ENCODE measurements at regions of chr14 and their contacts with region 1.

Region 1: DNA sequence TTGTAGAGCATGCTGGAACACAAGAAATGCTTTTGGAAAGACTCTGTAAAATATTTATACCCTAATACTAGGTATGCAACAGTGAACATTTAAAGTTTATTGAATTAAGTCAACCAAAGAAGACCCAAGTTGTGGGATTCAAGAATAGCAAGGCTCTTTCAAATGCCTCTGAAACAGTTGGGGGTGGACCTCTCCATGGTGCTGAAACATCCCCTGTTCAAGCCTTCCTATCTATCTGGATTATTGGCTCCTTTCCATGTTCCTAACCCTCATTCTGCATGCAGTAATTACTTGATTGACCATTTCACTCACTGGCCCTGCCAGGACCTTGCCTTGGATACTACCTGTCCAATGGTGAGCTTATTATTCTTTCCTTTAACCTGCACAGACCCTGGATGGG is 349.7 kb downstream of the NRXN3 start:
- DNase-seq: peak; percentile 48
- ATAC-seq: no peak
- H3K4me3 Mint-ChIP-seq: no peak overlapping the region
- H3K27ac Mint-ChIP-seq: no peak overlapping the region
- H3K4me1 Mint-ChIP-seq: no peaks in the 10 kb centered on the region
- H3K27me3 Mint-ChIP-seq: no peaks in the 10 kb centered on the region

Region 2: DNA sequence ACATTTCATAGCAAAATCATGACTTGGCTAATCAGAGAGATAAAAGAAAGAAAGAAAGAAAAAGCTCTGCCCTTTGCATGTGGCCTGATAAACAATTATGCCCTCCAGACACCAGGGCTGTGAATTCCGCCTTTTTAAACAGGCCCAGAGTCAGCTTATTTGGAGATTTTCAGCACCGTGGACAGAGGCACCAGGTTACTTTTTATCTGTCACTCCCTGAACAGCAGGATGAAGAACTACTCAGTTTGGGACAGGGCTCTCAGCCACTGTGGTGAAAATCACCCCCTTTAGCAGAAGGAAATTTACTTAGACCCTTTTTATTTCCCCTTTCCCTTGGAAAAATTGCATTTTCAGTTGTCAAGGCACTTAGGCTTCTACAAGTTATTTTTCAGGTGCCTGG is 10.2 kb after region 1 on chr14:
- CTCF ChIA-PET with region 1: no interaction called
- POLR2A ChIA-PET with region 1: no interaction called
- intact Hi-C with region 1: loop called in 1 of 2 experiments (anchors 1 kb)
- DNase-seq: peak; percentile 40
- ATAC-seq: no peak
- H3K4me3 Mint-ChIP-seq: no peak overlapping the region
- H3K27ac Mint-ChIP-seq: no peak overlapping the region
- H3K4me1 Mint-ChIP-seq: no peaks in the 10 kb centered on the region
- H3K27me3 Mint-ChIP-seq: no peaks in the 10 kb centered on the region

Region 3: GRCh38 chr14:79074510-79074909 is 554.7 kb after region 1 on chr14:
- CTCF ChIA-PET with region 1: no interaction called
- POLR2A ChIA-PET with region 1: no interaction called
- intact Hi-C with region 1: no loop called
- DNase-seq: no peak
- ATAC-seq: no peak
- H3K4me3 Mint-ChIP-seq: no peak overlapping the region
- H3K27ac Mint-ChIP-seq: no peak overlapping the region
- H3K4me1 Mint-ChIP-seq: no peaks in the 10 kb centered on the region
- H3K27me3 Mint-ChIP-seq: peaks cover 3% of the 10 kb centered on the region